GM18951 (cell line): ENCODE measurements at regions of chr14 and their contacts with region 1.

Region 1: GRCh38 chr14:104973300-104974145 is 4.7 kb downstream of the AHNAK2 start:
- POLR2A ChIP-seq: no peak

Region 2: DNA sequence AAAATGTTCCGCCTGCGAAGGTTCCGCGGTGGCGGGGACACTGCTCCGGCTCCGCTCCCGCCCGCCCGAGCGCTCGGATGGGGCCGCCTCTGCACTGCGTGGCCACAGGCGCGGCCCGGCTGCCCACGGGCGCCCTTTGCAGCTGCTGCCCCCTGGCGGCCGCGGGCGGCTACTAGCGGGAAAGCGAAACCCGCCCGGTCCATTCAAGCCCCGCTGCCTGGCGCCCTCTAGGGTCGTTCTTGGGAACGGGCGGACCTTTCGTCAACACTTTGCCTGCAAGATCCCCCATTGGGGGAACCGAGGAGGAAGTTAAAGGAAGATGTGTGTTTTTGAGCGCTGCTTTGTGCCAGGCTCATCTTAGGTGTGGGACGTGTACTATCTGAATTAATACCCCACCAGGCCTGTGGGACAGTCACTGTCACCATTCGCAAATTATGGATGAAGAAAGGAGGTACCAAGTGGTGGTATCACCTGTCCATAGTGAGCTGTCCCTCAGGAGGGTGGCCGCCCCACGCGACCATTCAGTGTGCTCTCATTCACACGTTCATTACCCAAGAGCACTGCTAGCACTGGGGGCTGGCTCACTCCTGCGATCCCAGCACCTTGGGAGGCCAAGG is 72.3 kb after region 1 on chr14:
- in situ Hi-C with region 1: loop called (anchors 5 kb)
- POLR2A ChIP-seq: peak; percentile 39